Activated CD4-positive, alpha-beta memory T cell treated with anti-CD3 and anti-CD28 coated beads for 36 hours (primary cell): ENCODE measurements at regions of chr6 and their contacts with region 1.

Region 1: GRCh38 chr6:153032255-153032882 is 29.9 kb upstream of the MTRF1L start:
- DNase-seq: no peak
- H3K4me3 Mint-ChIP-seq: no peak overlapping the region
- H3K27ac Mint-ChIP-seq: no peak overlapping the region
- H3K4me1 Mint-ChIP-seq: no peaks in the 10 kb centered on the region
- H3K27me3 Mint-ChIP-seq: peaks cover 5% of the 10 kb centered on the region

Region 2: GRCh38 chr6:153312641-153313040 is 280.3 kb after region 1 on chr6:
- CTCF ChIA-PET with region 1: interaction called, 3 read pairs
- POLR2A ChIA-PET with region 1: no interaction called
- intact Hi-C with region 1: loop called (anchors 5 kb)
- DNase-seq: peak; percentile 41
- H3K4me3 Mint-ChIP-seq: no peak overlapping the region
- H3K27ac Mint-ChIP-seq: no peak overlapping the region
- H3K4me1 Mint-ChIP-seq: no peaks in the 10 kb centered on the region
- H3K27me3 Mint-ChIP-seq: no peaks in the 10 kb centered on the region

Region 3: DNA sequence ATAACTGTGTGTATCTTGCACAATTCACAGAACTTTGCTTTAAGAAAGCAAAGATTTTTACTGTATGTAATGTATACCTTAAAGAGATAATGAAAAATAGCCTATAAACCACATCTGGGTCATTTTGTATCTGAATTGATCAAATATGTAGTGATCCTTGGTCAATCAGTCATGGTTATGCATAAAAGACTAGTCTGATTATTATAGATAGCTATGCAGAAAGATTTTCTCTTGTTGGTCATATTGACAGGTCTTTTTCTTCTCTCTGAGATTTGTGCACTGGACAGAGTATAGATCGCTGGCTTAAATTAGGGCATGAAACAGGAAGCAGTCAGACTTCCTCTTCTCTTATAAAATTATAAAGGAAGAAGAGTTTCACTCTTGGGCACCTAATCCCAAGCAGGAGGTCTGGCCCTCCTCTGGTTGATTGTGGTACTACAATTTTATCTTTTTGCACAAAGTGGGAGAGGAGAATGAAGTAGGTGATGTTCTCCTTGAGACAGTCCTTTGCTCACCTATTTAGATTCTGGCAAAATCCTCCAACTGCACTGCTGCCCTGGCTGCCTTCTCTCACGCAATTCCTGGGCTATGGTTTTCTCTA is 479.6 kb after region 1 on chr6:
- CTCF ChIA-PET with region 1: interaction called, 7 read pairs
- POLR2A ChIA-PET with region 1: no interaction called
- intact Hi-C with region 1: loop called (anchors 10 kb)
- DNase-seq: no peak
- H3K4me3 Mint-ChIP-seq: no peak overlapping the region
- H3K27ac Mint-ChIP-seq: no peak overlapping the region
- H3K4me1 Mint-ChIP-seq: no peaks in the 10 kb centered on the region
- H3K27me3 Mint-ChIP-seq: no peaks in the 10 kb centered on the region

Region 4: DNA sequence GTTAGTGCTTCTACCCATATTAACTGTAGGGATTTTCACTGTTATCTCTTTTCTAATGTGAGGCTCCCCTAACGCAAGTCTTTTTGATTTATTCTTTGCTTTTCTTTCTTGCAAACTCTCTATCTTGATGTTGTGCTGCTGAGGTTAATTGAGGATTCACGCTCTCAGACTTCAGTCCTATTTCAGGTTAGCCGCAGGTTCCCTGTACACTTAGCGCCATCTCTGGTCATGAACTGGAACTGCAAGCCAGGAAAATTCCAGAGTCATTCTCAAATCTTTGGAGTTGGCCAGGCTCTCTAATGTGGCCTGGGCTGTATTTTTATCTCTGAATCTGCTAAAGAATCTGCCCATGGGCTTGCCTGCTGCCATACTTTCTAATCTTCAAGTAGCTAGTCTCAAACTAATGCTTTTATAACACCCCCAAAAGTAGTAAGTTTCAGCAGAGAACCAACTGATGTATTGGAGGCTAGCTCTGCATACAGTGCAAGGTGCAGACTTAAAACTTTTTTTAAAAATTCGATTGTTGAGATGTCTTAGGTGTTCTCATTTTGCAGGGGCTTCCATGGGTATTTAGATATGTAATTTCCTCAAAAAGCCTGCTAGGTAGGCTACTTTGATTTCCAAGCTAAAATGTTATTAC is 915.6 kb after region 1 on chr6:
- CTCF ChIA-PET with region 1: no interaction called
- POLR2A ChIA-PET with region 1: no interaction called
- intact Hi-C with region 1: loop called (anchors 10 kb)
- DNase-seq: no peak
- H3K4me3 Mint-ChIP-seq: no peak overlapping the region
- H3K27ac Mint-ChIP-seq: no peak overlapping the region
- H3K4me1 Mint-ChIP-seq: no peaks in the 10 kb centered on the region
- H3K27me3 Mint-ChIP-seq: peaks cover 2% of the 10 kb centered on the region